ENCODE measurements at regions of chr19 and their contacts with region 1.

Region 1: GRCh38 chr19:51097166-51097738 is 11.0 kb downstream of the CTU1 start:
- DNase-seq: peak; percentile 58 to 82 (median 80)
- ATAC-seq: peak; percentile 28 to 43
- H3K4me3 ChIP-seq: no peak overlapping the region
- H3K27ac ChIP-seq: no peak overlapping the region
- H3K4me1 ChIP-seq: peaks cover under 1% of the 10 kb centered on the region
- H3K27me3 ChIP-seq: no peaks in the 10 kb centered on the region

Region 2: DNA sequence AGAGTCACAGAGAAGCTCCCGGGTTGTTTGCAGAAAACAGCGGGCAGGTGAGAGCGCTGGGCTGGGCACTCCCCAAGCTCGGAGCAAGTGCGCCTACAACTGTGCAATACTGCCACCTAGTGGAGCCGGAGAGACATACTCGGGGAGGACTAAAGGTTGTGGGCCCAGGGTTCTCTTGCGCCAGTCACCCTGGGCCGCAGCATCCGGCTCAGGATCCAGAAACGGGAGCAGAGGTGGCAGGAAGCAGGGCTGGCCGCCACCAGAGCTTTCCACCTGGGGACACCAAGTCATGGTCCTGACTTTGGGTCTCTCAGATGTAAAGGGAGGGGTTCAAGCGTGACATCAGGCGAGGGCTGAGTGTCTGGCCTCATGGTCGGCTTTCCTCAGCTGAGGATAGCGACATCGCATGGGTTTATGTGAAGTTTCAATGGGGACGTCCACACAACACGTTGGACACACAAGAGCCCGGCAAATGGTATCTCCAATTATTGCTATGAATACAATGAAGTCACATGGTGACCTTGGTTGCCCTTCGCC is 174.9 kb before region 1 on chr19:
- intact Hi-C with region 1: loop called in 1 of 4 experiments (anchors 10 kb)
- DNase-seq: peak; percentile 62 to 77 (median 76)
- ATAC-seq: peak; percentile 81 to 92
- H3K4me3 ChIP-seq: no peak overlapping the region
- H3K27ac ChIP-seq: no peak overlapping the region
- H3K4me1 ChIP-seq: no peaks in the 10 kb centered on the region
- H3K27me3 ChIP-seq: peaks cover 5% of the 10 kb centered on the region

Region 3: GRCh38 chr19:50933640-50934039 is 163.6 kb before region 1 on chr19:
- intact Hi-C with region 1: loop called in 3 of 4 experiments (anchors 10 kb)
- DNase-seq: no peak
- ATAC-seq: no peak
- H3K4me3 ChIP-seq: no peak overlapping the region
- H3K27ac ChIP-seq: no peak overlapping the region
- H3K4me1 ChIP-seq: no peaks in the 10 kb centered on the region
- H3K27me3 ChIP-seq: no peaks in the 10 kb centered on the region

Region 4: GRCh38 chr19:51016798-51017683 is 80.2 kb before region 1 on chr19:
- intact Hi-C with region 1: loop called in 3 of 4 experiments (anchors 2 to 5 kb)
- DNase-seq: peak; percentile 36 to 84 (median 73)
- ATAC-seq: peak; percentile 13 to 46
- H3K4me3 ChIP-seq: no peak overlapping the region
- H3K27ac ChIP-seq: no peak overlapping the region
- H3K4me1 ChIP-seq: peaks cover 4% of the 10 kb centered on the region
- H3K27me3 ChIP-seq: no peaks in the 10 kb centered on the region

Region 5: DNA sequence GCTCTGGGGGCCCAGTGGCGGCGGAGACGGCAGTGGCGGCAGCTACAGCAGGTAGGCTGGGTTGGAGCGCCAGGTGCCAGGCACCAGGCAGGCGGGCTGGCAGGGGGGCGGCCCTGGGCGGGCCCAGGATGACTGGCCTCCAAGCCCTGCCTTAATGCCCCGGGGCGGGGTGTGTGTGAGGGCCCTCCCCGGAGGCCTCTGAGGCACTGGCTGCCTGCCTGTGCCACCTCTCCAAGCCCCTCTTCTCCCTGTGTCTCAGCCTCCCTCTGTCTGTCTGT is 70.8 kb before region 1 on chr19 and contains the start of gene KLK11:
- intact Hi-C with region 1: loop called in 3 of 4 experiments (anchors 2 to 5 kb)
- DNase-seq: no peak
- ATAC-seq: peak; percentile 35 to 53
- H3K4me3 ChIP-seq: no peak within 1 kb of the TSS
- H3K27ac ChIP-seq: no peak within 1 kb of the TSS
- H3K4me1 ChIP-seq: no peaks in the 10 kb centered on the region
- H3K27me3 ChIP-seq: no peaks in the 10 kb centered on the region
- total RNA-seq, gene KLK11: 0.50 to 0.69 (median 0.50) TPM in 3 of 4 donors, not detected in the other

Region 6: DNA sequence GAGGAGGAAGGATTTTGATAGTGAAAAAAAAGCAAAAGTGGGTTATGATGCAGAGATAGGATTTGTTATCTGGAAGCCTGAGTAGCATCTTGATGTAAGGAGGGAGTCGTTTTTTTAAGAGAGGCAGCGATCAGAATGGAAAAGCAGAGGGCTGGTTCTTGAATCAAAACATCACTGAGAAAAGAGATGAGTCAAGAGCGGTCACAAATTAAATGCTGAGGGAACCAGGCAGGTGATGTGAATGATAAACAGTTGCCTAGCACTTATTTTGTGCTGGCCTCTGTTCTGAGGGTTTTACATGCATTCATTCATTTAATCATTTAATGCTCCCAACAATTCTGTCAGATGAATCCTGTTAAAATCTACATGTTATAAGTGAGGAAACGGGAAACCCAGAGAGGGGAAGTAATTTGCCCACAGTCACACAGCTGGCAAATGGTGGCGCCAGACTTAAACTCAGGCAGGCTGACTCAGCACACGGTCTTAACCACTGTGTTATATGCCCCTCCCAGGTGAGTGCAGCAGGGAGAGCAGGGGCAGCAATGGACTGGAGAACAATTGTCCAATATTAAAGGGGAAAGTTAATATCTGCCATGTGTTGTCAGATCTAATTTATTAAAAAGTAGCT is 175.0 kb after region 1 on chr19:
- intact Hi-C with region 1: no loop called
- DNase-seq: no peak
- ATAC-seq: no peak
- H3K4me3 ChIP-seq: no peak overlapping the region
- H3K27ac ChIP-seq: no peak overlapping the region
- H3K4me1 ChIP-seq: no peaks in the 10 kb centered on the region
- H3K27me3 ChIP-seq: no peaks in the 10 kb centered on the region